RWPE1 (cell line): ENCODE measurements at regions of chr9 and their contacts with region 1.

Region 1: GRCh38 chr9:98146101-98146991 is 27.3 kb upstream of the TRIM14 start:
- DNase-seq: peak; percentile 94
- H3K27ac ChIP-seq: peak overlapping the region; percentile 98
- CTCF ChIP-seq: no peak

Region 2: GRCh38 chr9:98097836-98098235 is 48.5 kb before region 1 on chr9:
- CTCF ChIA-PET with region 1: no interaction called
- POLR2A ChIA-PET with region 1: no interaction called
- DNase-seq: no peak
- H3K27ac ChIP-seq: no peak overlapping the region
- CTCF ChIP-seq: no peak

Region 3: DNA sequence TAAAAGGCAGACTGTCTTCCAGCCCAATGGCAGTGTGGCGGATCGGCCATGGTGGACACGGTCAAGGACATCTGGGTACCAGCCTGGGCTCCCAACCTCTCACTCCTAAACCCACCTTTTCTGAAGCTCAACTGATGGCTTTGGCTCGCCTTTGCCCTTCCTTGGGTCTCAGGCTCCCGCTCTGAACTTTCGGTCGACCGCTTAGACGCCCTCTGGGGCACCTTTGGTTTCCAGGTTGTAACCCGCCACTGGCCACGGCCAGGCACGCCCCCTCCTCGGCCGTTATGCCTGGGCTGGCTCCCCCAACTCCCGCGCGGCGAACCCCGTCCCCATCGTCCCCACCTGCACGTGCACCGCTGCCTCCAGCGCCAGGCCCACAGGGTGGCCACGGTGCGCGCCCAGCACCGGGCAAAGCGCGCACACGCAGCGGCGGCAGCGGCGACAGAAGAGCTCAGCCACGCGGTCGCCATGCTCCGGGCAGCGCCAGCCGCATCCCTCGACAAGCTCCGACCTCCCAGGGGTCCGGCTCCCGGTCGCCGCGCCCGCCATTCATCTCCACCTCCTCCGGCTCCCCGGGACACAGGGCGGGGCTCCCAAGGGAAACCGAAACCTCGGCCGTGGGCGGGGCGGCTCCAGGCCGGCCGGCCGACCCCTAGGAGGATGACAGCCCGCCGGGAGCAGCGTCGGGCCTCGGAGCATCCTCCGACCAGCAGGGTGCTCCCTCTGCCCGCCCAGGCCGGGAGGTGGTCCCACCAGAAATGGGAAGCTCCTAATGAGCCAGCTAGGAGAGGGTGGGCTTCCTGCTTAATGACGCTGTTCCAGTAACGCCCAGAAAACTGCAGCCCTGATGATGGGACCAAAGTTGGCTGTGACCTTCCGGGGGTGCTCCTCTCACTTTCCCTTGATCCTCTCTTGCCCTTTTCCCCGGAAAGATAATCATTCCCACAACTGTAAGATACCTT is 27.4 kb before region 1 on chr9 and contains the start of gene TRIM14:
- CTCF ChIA-PET with region 1: no interaction called
- POLR2A ChIA-PET with region 1: interaction called, 20 read pairs
- DNase-seq: peak; percentile 95
- H3K27ac ChIP-seq: peak within 1 kb of the TSS; percentile 81
- CTCF ChIP-seq: peak; percentile 54